CD8-positive, alpha-beta T cell (primary cell): ENCODE measurements at regions of chr7 and their contacts with region 1.

Region 1: DNA sequence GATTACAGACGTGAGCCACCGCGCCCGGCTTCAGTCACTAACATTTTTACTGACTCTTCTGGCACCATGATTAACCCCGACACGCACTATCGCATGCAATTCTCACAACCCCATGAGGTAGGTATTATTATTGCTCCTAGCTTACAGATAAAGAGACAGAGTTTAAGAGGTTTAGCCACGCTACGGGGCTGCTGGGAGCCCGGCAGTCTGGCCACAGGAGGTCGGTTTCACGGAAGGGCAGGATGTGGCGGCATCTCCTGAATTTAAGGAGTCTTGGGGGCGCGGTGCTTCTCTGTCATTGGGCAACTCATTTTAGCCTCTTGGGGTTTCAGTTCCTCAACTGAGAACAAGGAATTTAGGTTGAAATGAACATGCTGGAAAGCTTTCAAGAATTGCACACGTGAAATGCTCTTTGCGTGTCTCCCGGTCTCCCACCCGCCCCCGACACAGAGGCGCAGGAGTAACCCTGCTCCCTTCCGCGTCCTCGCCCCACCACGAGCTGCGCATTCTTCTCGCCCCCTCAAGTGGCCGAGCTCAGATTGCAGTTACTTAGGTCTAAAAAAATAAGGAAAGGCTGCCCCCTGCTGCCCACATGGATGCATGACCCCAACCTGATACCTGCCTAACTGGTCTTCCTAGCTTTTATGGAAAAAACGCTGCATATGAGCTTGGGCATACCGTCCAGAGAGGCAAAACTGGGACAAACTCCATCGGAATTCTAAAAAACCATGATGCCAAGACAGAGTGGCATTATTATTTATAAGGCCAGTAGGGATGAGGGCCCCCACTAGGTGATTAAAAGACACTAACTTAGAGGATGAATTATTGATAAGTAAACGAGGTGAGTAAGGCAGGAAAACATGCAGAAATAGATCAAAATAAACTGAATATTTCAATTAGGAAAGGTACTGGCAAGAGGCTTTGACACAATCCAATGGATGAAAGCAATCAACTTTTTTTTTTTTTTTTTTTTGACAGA is 12.4 kb downstream of the PRSS2 start:
- DNase-seq: peak; percentile 57 to 91 (median 80)
- ATAC-seq: peak; percentile 34
- H3K4me3 ChIP-seq: peak overlapping the region; percentile 37 to 44
- H3K4me3 Mint-ChIP-seq: peak overlapping the region; percentile 79
- H3K27ac ChIP-seq: peak overlapping the region; percentile 44 to 50
- H3K27ac Mint-ChIP-seq: peak overlapping the region; percentile 99
- H3K4me1 ChIP-seq: peaks cover 8% of the 10 kb centered on the region
- H3K4me1 Mint-ChIP-seq: peaks cover 12% of the 10 kb centered on the region
- H3K27me3 ChIP-seq: no peaks in the 10 kb centered on the region
- H3K27me3 Mint-ChIP-seq: no peaks in the 10 kb centered on the region
- CTCF ChIP-seq: peak; percentile 65

Region 2: GRCh38 chr7:142615508-142615907 is 167.7 kb before region 1 on chr7:
- CTCF ChIA-PET with region 1: no interaction called
- POLR2A ChIA-PET with region 1: interaction called, 4 read pairs
- intact Hi-C with region 1: loop called in 1 of 2 experiments (anchors 5 kb)
- DNase-seq: peak in 1 of 9 experiments; percentile 19
- ATAC-seq: no peak
- H3K4me3 ChIP-seq: peak overlapping the region in 1 of 2 experiments; percentile 1
- H3K4me3 Mint-ChIP-seq: peak overlapping the region; percentile 66
- H3K27ac ChIP-seq: no peak overlapping the region
- H3K27ac Mint-ChIP-seq: peak overlapping the region; percentile 80
- H3K4me1 ChIP-seq: no peaks in the 10 kb centered on the region
- H3K4me1 Mint-ChIP-seq: peaks cover 4% of the 10 kb centered on the region
- H3K27me3 ChIP-seq: no peaks in the 10 kb centered on the region
- H3K27me3 Mint-ChIP-seq: peaks cover 2% of the 10 kb centered on the region
- CTCF ChIP-seq: no peak

Region 3: DNA sequence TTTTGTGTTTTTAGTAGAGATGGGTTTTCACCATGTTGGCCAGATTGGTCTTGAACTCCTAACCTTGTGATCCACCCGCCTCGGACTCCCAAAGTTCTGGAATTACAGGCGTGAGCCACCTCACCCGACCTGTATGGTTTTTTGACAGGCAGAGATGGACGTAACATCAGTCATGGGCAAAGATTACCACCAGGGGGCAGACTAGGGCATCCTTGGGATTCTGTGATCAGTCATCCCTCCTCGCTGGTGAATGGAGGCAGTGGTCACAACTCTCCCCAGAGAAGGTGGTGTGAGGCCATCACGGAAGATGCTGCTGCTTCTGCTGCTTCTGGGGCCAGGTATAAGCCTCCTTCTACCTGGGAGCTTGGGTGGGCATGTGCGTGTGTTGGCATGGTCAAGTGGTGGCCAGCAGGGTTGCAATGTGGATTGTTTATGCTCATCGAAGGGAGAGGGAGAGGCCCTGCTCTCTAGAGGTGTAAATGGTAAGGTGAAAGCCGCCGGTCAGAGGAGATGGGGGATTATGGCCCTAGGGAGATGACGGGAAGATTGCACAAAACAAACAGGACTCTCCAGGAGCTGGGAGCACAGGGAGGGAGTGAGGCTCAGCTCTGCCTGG is 156.7 kb before region 1 on chr7:
- CTCF ChIA-PET with region 1: interaction called, 24 read pairs
- POLR2A ChIA-PET with region 1: no interaction called
- intact Hi-C with region 1: no loop called
- DNase-seq: peak; percentile 30 to 75 (median 68)
- ATAC-seq: peak; percentile 76
- H3K4me3 ChIP-seq: no peak overlapping the region
- H3K4me3 Mint-ChIP-seq: peak overlapping the region; percentile 78
- H3K27ac ChIP-seq: no peak overlapping the region
- H3K27ac Mint-ChIP-seq: peak overlapping the region; percentile 78
- H3K4me1 ChIP-seq: no peaks in the 10 kb centered on the region
- H3K4me1 Mint-ChIP-seq: peaks cover 2% of the 10 kb centered on the region
- H3K27me3 ChIP-seq: no peaks in the 10 kb centered on the region
- H3K27me3 Mint-ChIP-seq: no peaks in the 10 kb centered on the region
- CTCF ChIP-seq: peak; percentile 53

Region 4: DNA sequence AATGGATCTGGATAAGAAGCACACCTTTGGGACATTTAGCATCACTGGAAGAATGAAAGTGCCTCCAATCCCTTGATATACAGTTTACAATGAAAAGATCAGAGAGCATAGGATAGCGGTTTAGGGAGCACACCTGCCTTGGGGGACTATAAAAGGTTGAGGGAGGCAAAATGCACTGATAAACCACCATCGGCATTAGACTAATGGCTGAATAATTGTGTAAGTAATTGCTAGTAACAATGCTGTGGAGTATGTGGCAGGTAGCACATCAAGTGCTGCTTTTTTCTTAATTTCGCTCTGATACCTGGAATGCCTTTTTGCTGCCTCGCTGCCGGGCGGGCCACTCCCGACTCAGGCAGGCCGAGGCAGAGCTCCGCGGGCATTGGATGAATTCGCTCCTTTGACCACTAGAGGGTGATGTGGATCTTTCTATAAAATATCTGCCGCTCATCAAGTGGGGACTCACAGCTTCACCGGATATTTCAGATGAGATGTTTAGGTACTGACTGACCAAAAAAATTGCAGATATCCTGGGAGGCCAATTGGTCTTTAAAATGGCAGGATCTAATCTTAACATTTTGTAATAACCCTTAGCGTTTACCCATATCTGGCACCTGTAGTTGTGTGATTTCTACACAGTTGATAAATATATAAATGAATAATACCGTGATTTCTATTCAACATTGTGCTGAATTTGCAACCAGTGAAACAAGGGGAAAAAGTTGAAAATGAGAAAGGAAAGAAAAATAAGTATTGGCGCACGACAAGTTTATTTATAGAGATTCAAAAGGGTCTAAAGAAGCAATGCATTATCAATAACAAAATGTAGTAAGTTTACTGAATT is 150.7 kb before region 1 on chr7:
- CTCF ChIA-PET with region 1: interaction called, 25 read pairs
- POLR2A ChIA-PET with region 1: interaction called, 13 read pairs
- intact Hi-C with region 1: loop called (anchors 1 kb)
- DNase-seq: peak; percentile 10 to 82 (median 49)
- ATAC-seq: peak; percentile 51
- H3K4me3 ChIP-seq: no peak overlapping the region
- H3K4me3 Mint-ChIP-seq: no peak overlapping the region
- H3K27ac ChIP-seq: no peak overlapping the region
- H3K27ac Mint-ChIP-seq: peak overlapping the region; percentile 18
- H3K4me1 ChIP-seq: no peaks in the 10 kb centered on the region
- H3K4me1 Mint-ChIP-seq: peaks cover 13% of the 10 kb centered on the region
- H3K27me3 ChIP-seq: no peaks in the 10 kb centered on the region
- H3K27me3 Mint-ChIP-seq: peaks cover 2% of the 10 kb centered on the region
- CTCF ChIP-seq: peak; percentile 58

Region 5: DNA sequence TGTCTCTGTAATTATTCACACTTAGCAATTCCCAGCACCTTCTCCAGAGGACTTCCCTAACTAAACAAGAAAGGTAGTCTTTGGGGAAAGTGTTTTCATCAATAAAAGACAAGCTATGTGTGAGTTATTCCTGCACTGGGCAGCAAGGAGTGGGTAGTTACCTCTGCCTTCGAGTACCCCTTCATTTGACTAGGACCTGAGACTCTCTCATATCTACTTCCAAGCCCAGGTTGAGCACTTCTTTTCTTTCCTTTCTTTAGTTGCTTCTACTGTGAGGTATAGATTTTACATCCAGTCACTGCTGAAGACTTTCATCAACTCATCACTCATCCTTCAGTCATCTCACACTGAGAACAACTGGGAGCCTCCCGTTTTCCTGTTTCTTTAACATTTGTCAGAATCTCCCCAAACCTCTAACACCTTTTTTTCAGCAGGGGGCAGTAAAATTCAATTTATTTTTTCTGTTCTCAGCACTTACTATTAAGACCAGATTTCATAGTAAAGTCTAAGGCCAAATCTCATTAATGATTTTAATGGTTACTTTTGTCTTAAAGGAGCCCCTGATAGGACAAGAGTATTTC is 114.0 kb before region 1 on chr7:
- CTCF ChIA-PET with region 1: interaction called, 21 read pairs
- POLR2A ChIA-PET with region 1: interaction called, 5 read pairs
- intact Hi-C with region 1: loop called (anchors 1 kb)
- DNase-seq: peak in 2 of 9 experiments; percentile 41 to 56
- ATAC-seq: peak; percentile 29
- H3K4me3 ChIP-seq: no peak overlapping the region
- H3K4me3 Mint-ChIP-seq: no peak overlapping the region
- H3K27ac ChIP-seq: no peak overlapping the region
- H3K27ac Mint-ChIP-seq: peak overlapping the region; percentile 20
- H3K4me1 ChIP-seq: peaks cover 20% of the 10 kb centered on the region
- H3K4me1 Mint-ChIP-seq: peaks cover 25% of the 10 kb centered on the region
- H3K27me3 ChIP-seq: no peaks in the 10 kb centered on the region
- H3K27me3 Mint-ChIP-seq: no peaks in the 10 kb centered on the region
- CTCF ChIP-seq: peak; percentile 30

Region 6: DNA sequence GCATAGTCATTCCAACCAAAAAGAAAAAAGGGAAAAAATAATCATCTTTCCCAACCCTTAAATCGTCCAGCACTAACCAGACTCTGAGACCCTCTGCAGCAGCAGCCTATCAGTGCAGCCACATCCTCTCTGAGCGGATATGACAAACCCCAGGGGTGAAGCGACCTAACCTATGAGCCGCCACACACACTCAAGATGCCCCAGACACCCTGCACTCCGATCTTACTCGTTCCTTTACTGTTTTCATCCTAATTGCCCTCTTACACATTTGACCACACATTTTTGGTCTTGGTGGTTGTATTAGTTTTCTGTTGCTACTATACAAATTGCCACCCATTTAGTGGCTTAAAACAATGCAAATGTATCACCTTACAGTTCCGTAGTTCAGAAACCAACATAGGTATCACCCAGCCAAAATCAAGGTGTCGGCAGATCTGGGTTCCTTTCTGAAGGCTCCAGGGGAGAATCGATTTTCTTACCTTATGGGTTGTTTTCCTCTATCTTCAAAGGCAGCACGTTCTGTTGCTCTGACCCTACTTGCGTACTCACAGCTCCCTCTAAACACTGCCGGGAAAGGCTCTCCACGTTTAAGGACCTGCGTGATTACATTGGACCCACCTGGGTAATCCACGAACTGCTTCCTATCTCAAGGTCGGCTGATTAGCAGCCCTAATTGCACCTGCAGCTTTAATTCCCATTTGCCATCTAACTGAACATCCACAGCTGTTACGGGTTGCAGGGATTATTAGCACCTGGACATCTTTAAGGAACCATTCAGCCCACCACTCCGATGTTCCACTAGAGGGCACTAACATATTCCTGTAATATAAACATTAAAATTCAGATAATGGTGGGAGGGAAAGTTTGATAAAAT is 71.2 kb before region 1 on chr7:
- CTCF ChIA-PET with region 1: interaction called, 21 read pairs
- POLR2A ChIA-PET with region 1: interaction called, 23 read pairs
- intact Hi-C with region 1: loop called (anchors 1 kb)
- DNase-seq: peak in 6 of 9 experiments; percentile 26 to 74 (median 46)
- ATAC-seq: peak; percentile 76
- H3K4me3 ChIP-seq: peak overlapping the region; percentile 42 to 64
- H3K4me3 Mint-ChIP-seq: peak overlapping the region; percentile 89
- H3K27ac ChIP-seq: peak overlapping the region; percentile 56 to 70
- H3K27ac Mint-ChIP-seq: peak overlapping the region; percentile 95
- H3K4me1 ChIP-seq: peaks cover 46% of the 10 kb centered on the region
- H3K4me1 Mint-ChIP-seq: peaks cover 58% of the 10 kb centered on the region
- H3K27me3 ChIP-seq: no peaks in the 10 kb centered on the region
- H3K27me3 Mint-ChIP-seq: no peaks in the 10 kb centered on the region
- CTCF ChIP-seq: peak; percentile 38